Mammary epithelial cell (primary cell): ENCODE measurements at regions of chr1 and their contacts with region 1.

Region 1: GRCh38 chr1:33127001-33127791 is 46.2 kb downstream of the AZIN2 start:
- DNase-seq: peak; percentile 99
- H3K4me3 ChIP-seq: peak overlapping the region; percentile 90 to 100 (median 96)
- H3K27ac ChIP-seq: peak overlapping the region; percentile 79
- H3K4me1 ChIP-seq: peaks cover 20% of the 10 kb centered on the region
- H3K27me3 ChIP-seq: no peaks in the 10 kb centered on the region
- CTCF ChIP-seq: peak; percentile 95 to 99

Region 2: GRCh38 chr1:33181921-33182341 is 54.7 kb after region 1 on chr1 and contains the start of gene TRIM62:
- CTCF ChIA-PET with region 1: interaction called, 7 read pairs
- dilution Hi-C with region 1: no loop called
- in situ Hi-C with region 1: no loop called
- intact Hi-C with region 1: loop called (anchors 1 kb)
- DNase-seq: peak; percentile 80
- H3K4me3 ChIP-seq: peak within 1 kb of the TSS; percentile 69 to 95 (median 74)
- H3K27ac ChIP-seq: no peak within 1 kb of the TSS
- H3K4me1 ChIP-seq: peaks cover 17% of the 10 kb centered on the region
- H3K27me3 ChIP-seq: no peaks in the 10 kb centered on the region
- CTCF ChIP-seq: no peak
- total RNA-seq, gene TRIM62: 4.2 to 5.6 TPM